CD4-positive, alpha-beta T cell (primary cell): ENCODE measurements at regions of chr12 and their contacts with region 1.

Region 1: DNA sequence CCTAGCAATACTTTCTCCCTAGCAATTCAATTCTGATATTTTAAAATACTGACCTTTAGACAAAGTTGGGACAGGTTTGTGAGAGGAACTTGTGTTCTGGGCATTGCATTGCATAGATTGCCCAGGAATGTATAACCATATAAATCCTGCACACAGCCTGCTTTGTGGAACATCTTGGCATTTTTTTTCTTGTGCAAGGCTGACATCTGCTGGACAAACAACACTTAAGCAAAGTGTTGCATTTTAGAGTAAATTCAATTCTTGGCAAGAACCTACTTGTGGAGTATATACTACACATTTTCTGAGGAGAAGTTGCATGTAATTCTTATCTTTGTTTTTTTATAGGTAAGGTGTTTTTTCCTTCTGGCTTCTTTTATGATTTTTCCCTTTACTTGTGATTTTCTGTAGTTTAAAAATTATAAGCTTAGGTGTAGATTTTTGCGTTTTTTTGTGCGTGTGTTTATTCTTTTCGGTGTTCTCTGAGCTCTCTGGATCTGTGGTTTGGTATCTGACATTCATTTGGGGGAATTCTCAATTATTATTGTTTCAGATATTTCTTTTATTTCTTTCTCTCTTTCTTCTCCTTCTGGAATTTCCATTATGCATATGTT is 26.4 kb downstream of the TESPA1 start:
- DNase-seq: peak in 11 of 14 experiments; percentile 23 to 81 (median 44)
- ATAC-seq: peak; percentile 64
- H3K4me3 ChIP-seq: no peak overlapping the region
- H3K4me3 Mint-ChIP-seq: peak overlapping the region; percentile 0
- H3K27ac ChIP-seq: no peak overlapping the region
- H3K27ac Mint-ChIP-seq: peak overlapping the region; percentile 56
- H3K4me1 ChIP-seq: peaks cover 52% of the 10 kb centered on the region
- H3K4me1 Mint-ChIP-seq: peaks cover 91% of the 10 kb centered on the region
- H3K27me3 ChIP-seq: no peaks in the 10 kb centered on the region
- H3K27me3 Mint-ChIP-seq: no peaks in the 10 kb centered on the region
- CTCF ChIP-seq: peak; percentile 77

Region 2: DNA sequence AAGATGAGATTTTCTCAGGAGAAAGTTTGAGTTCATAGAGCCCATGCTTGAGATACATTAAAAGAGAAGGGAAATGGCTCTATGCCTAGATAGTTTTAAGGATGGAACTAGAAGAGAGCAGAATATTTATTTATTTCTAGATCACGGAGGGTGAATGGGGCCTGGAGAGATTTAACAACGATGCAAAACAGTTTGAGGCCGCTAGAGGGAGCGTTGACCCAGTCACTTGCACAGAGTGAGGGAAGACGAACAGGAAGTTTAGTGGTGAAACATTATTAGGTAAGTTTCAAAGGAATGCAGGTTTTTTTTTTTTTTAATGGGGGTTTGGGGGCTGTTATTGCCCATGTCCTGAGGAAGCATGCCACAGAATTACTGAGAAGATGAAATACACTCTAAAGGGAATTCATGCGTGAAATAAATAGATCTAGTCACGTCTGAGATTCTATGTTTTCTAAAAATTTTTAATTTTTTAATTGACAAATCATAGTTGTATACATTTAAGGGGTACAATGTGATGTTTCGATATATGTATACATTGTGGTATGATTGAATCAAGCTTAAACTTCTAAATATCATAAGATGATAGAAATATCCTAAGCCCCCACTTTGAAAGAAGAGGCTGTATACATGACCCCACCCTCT is 354.9 kb before region 1 on chr12:
- CTCF ChIA-PET with region 1: no interaction called
- POLR2A ChIA-PET with region 1: no interaction called
- intact Hi-C with region 1: loop called in 1 of 2 experiments (anchors 10 kb)
- DNase-seq: peak; percentile 41 to 81 (median 56)
- ATAC-seq: peak; percentile 99
- H3K4me3 ChIP-seq: no peak overlapping the region
- H3K4me3 Mint-ChIP-seq: no peak overlapping the region
- H3K27ac ChIP-seq: no peak overlapping the region
- H3K27ac Mint-ChIP-seq: no peak overlapping the region
- H3K4me1 ChIP-seq: no peaks in the 10 kb centered on the region
- H3K4me1 Mint-ChIP-seq: peaks cover 8% of the 10 kb centered on the region
- H3K27me3 ChIP-seq: no peaks in the 10 kb centered on the region
- H3K27me3 Mint-ChIP-seq: peaks cover 15% of the 10 kb centered on the region
- CTCF ChIP-seq: peak; percentile 91

Region 3: DNA sequence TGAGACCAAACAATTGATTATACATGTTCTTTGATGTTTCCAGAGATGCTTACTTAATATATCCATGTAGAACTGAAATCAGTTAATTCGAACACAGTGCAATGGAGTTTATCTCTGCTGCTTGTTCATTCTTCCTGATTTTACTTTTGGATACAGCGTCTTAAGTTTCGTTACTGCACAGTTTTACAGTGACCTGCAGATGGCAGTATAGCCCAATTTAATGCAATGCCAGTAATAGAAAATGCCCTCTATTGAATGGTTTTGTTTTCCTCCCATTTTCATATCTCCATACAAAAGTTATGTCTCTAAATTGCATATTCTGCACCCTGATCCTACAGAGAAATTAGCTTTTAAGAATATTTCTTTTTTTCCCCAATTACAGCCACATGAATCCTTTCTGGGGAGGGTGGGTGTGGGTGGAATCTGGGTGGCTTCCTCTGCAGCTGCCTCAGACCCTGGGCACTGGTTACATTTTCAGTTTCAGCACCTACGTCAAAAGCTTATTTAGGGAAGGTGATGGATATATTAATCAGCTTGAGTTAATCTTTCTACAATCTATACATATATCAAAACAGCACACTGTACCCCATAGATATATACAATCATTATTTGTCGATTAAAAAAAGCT is 208.8 kb before region 1 on chr12:
- CTCF ChIA-PET with region 1: interaction called, 5 read pairs
- POLR2A ChIA-PET with region 1: interaction called, 6 read pairs
- intact Hi-C with region 1: loop called (anchors 1 to 2 kb)
- DNase-seq: peak in 9 of 14 experiments; percentile 6 to 83 (median 28)
- ATAC-seq: peak; percentile 71
- H3K4me3 ChIP-seq: no peak overlapping the region
- H3K4me3 Mint-ChIP-seq: no peak overlapping the region
- H3K27ac ChIP-seq: no peak overlapping the region
- H3K27ac Mint-ChIP-seq: no peak overlapping the region
- H3K4me1 ChIP-seq: peaks cover 4% of the 10 kb centered on the region
- H3K4me1 Mint-ChIP-seq: peaks cover 18% of the 10 kb centered on the region
- H3K27me3 ChIP-seq: no peaks in the 10 kb centered on the region
- H3K27me3 Mint-ChIP-seq: no peaks in the 10 kb centered on the region
- CTCF ChIP-seq: peak; percentile 91

Region 4: GRCh38 chr12:54853995-54854566 is 104.1 kb before region 1 on chr12 and contains the start of gene MUCL1:
- CTCF ChIA-PET with region 1: interaction called, 4 read pairs
- POLR2A ChIA-PET with region 1: interaction called, 3 read pairs
- intact Hi-C with region 1: loop called (anchors 1 kb)
- DNase-seq: peak; percentile 46 to 84 (median 64)
- ATAC-seq: peak; percentile 100
- H3K4me3 ChIP-seq: no peak within 1 kb of the TSS
- H3K4me3 Mint-ChIP-seq: no peak within 1 kb of the TSS
- H3K27ac ChIP-seq: no peak within 1 kb of the TSS
- H3K27ac Mint-ChIP-seq: no peak within 1 kb of the TSS
- H3K4me1 ChIP-seq: no peaks in the 10 kb centered on the region
- H3K4me1 Mint-ChIP-seq: no peaks in the 10 kb centered on the region
- H3K27me3 ChIP-seq: no peaks in the 10 kb centered on the region
- H3K27me3 Mint-ChIP-seq: no peaks in the 10 kb centered on the region
- CTCF ChIP-seq: peak; percentile 90
- total RNA-seq, gene MUCL1: not detected

Region 5: DNA sequence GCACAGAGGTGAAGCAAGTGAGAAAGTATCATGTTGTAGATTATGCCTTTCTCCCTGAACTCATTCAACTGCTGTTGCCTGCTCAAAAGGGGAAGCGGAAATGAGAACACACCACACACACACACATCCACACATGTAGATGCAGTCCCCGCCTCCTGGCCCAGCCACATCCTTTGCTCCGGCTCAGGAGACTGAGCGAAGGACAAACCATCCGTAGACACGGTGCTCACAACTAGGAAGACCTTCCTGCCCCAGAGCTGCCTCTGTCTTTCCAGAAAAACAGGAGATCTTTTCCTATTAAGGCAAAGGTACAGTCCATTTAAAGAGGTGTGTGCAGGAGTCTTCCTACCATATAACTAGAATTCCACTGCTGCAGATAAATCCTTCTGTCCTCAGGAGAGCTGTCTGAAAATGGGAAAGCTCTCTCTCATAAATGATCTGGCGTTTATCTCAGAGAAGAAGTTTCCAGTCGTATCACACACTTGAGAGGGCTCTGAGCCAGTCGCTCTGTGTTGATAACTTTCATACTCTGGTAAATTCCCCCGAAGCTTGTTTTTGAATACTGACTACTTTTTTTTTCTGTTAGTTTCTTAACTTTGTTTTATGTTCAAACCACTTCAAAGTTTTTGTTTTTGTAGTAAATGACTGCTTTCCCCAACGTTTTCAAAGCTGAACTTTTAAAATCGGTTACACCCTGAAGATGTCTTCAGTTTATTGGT is 26.7 kb after region 1 on chr12 and contains the start of gene TESPA1:
- CTCF ChIA-PET with region 1: interaction called, 6 read pairs
- POLR2A ChIA-PET with region 1: interaction called, 12 read pairs
- intact Hi-C with region 1: loop called (anchors 2 to 5 kb)
- DNase-seq: peak; percentile 74 to 94 (median 84)
- ATAC-seq: peak; percentile 87
- H3K4me3 ChIP-seq: peak within 1 kb of the TSS; percentile 73
- H3K4me3 Mint-ChIP-seq: peak within 1 kb of the TSS; percentile 91
- H3K27ac ChIP-seq: peak within 1 kb of the TSS; percentile 88 to 97
- H3K27ac Mint-ChIP-seq: peak within 1 kb of the TSS; percentile 100
- H3K4me1 ChIP-seq: peaks cover 40% of the 10 kb centered on the region
- H3K4me1 Mint-ChIP-seq: peaks cover 98% of the 10 kb centered on the region
- H3K27me3 ChIP-seq: no peaks in the 10 kb centered on the region
- H3K27me3 Mint-ChIP-seq: no peaks in the 10 kb centered on the region
- CTCF ChIP-seq: no peak
- total RNA-seq, gene TESPA1: 96.3 to 98.2 TPM